ENCODE measurements at regions of chr3 and their contacts with region 1.

Region 1: GRCh38 chr3:3015185-3016089 is 94.7 kb downstream of the IL5RA start:
- DNase-seq: peak; percentile 67
- H3K4me3 ChIP-seq: no peak overlapping the region
- H3K27ac ChIP-seq: no peak overlapping the region
- H3K4me1 ChIP-seq: no peaks in the 10 kb centered on the region
- H3K27me3 ChIP-seq: no peaks in the 10 kb centered on the region
- CTCF ChIP-seq: peak; percentile 66

Region 2: DNA sequence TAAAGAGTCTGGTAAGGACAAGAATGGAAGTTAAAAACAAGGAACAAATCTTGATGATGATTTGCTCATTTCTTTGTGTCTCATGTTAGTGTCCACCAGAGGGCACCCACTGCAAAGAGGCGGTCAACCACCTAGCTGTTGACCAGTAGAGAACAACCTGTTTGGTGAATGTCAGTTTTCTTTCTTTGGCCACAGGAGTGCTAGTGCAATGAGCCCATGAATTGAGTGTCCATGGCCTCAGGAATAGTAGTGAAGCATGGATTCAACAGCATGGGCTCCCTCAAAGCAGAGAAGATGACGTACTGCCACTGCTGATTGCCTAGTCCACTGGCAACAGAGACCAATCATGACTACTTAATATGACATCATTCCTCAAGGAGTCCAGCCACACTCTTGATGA is 1933.3 kb before region 1 on chr3:
- CTCF ChIA-PET with region 1: no interaction called
- POLR2A ChIA-PET with region 1: no interaction called
- intact Hi-C with region 1: loop called (anchors 10 kb)
- DNase-seq: peak; percentile 40
- H3K4me3 ChIP-seq: no peak overlapping the region
- H3K27ac ChIP-seq: no peak overlapping the region
- H3K4me1 ChIP-seq: peaks cover 8% of the 10 kb centered on the region
- H3K27me3 ChIP-seq: no peaks in the 10 kb centered on the region
- CTCF ChIP-seq: peak; percentile 69

Region 3: DNA sequence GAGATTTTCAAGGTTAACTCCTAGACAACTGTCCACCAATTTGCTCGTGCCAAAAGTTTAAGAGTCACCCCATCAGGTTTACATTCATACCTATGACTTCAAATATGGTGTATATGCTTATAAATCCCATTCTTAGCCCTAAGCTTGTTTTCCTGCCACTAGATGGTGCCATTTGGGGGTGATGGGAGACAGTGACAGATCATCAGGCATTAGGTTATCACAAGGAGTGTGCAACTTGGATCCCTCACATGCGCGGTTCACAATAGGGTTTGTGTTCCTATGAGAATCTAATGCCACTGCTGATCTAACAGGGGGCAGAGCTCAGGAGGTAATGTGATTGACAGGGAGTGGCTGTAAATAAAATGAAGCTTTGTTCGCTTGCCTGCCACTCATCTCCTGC is 1739.9 kb before region 1 on chr3:
- CTCF ChIA-PET with region 1: no interaction called
- POLR2A ChIA-PET with region 1: no interaction called
- intact Hi-C with region 1: loop called (anchors 10 kb)
- DNase-seq: peak; percentile 62
- H3K4me3 ChIP-seq: no peak overlapping the region
- H3K27ac ChIP-seq: no peak overlapping the region
- H3K4me1 ChIP-seq: peaks cover 7% of the 10 kb centered on the region
- H3K27me3 ChIP-seq: no peaks in the 10 kb centered on the region
- CTCF ChIP-seq: peak; percentile 58

Region 4: DNA sequence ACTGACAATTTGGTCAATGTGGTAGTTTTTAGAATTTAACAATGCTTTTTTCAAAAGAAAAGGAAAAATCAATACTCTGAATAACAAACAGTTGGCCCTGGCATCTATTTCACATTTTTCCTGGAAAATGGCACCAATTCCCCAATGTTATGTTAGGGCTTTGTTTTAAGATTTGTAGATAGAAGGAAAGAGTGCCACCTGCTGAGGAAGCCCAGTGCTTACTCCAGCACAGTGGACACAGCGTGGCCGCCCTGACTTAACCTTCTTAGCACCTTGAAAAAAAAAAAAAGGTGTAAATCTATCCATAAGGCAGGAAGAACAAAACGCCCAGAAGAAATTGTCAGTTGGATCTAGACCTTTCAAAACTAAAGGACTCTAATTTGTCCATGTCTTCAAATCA is 1027.5 kb before region 1 on chr3:
- CTCF ChIA-PET with region 1: no interaction called
- POLR2A ChIA-PET with region 1: no interaction called
- intact Hi-C with region 1: loop called (anchors 10 kb)
- DNase-seq: no peak
- H3K4me3 ChIP-seq: no peak overlapping the region
- H3K27ac ChIP-seq: no peak overlapping the region
- H3K4me1 ChIP-seq: no peaks in the 10 kb centered on the region
- H3K27me3 ChIP-seq: no peaks in the 10 kb centered on the region
- CTCF ChIP-seq: peak; percentile 43

Region 5: GRCh38 chr3:2156244-2156847 is 859.1 kb before region 1 on chr3:
- CTCF ChIA-PET with region 1: no interaction called
- POLR2A ChIA-PET with region 1: no interaction called
- intact Hi-C with region 1: loop called (anchors 10 kb)
- DNase-seq: peak; percentile 77
- H3K4me3 ChIP-seq: peak overlapping the region; percentile 34
- H3K27ac ChIP-seq: no peak overlapping the region
- H3K4me1 ChIP-seq: peaks cover 5% of the 10 kb centered on the region
- H3K27me3 ChIP-seq: no peaks in the 10 kb centered on the region
- CTCF ChIP-seq: peak; percentile 93

Region 6: DNA sequence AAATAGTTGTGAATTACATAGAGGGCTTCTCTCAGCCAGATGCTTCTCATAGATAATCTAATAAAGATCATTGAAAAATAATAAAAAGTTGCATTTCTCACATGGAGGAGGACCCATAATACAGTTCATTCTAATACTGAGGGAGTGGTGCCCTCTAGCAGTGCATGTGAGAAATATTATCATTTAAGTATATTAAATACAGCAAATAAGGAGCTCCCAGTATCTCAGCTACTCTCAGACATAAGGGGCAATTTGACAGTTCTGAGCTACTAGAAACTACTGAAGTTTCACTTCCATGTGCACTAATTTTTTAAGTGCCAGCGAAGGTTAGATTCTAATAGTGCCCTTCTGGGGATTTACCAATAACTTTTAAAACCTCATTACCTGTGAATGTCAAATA is 93.5 kb before region 1 on chr3:
- CTCF ChIA-PET with region 1: no interaction called
- POLR2A ChIA-PET with region 1: no interaction called
- intact Hi-C with region 1: loop called (anchors 1 kb)
- DNase-seq: peak; percentile 52
- H3K4me3 ChIP-seq: no peak overlapping the region
- H3K27ac ChIP-seq: no peak overlapping the region
- H3K4me1 ChIP-seq: no peaks in the 10 kb centered on the region
- H3K27me3 ChIP-seq: no peaks in the 10 kb centered on the region
- CTCF ChIP-seq: peak; percentile 60

Region 7: DNA sequence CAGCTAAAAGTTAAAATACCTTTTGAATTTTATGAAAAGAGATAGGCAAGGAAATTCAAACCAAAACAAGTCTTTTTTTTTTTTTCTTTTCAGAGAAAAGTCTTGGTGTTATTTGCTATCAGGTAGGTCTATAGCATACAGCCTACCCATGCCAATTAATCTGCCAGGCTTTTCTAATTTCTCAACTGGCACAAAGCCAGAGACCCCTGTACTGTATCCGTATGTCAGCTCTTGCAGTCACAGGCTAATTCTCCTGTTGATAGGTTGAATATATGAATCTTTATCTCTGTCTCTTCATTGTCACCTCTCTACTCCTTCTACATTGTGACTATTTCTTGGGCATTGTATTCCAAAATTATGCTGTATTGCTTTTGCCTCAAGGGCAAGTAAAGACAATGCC is 38.6 kb before region 1 on chr3:
- CTCF ChIA-PET with region 1: no interaction called
- POLR2A ChIA-PET with region 1: no interaction called
- intact Hi-C with region 1: no loop called
- DNase-seq: no peak
- H3K4me3 ChIP-seq: no peak overlapping the region
- H3K27ac ChIP-seq: no peak overlapping the region
- H3K4me1 ChIP-seq: no peaks in the 10 kb centered on the region
- H3K27me3 ChIP-seq: no peaks in the 10 kb centered on the region
- CTCF ChIP-seq: no peak